Activated CD4-positive, alpha-beta T cell treated with anti-CD3 and anti-CD28 coated beads for 36 hours (primary cell): ENCODE measurements at regions of chr16 and their contacts with region 1.

Region 1: GRCh38 chr16:2867987-2868789 is 10.2 kb upstream of the PRSS22 start:
- DNase-seq: peak; percentile 98
- ATAC-seq: peak; percentile 97
- H3K4me3 Mint-ChIP-seq: peak overlapping the region; percentile 81
- H3K27ac Mint-ChIP-seq: peak overlapping the region; percentile 85
- H3K4me1 Mint-ChIP-seq: peaks cover 7% of the 10 kb centered on the region
- H3K27me3 Mint-ChIP-seq: no peaks in the 10 kb centered on the region

Region 2: GRCh38 chr16:2682209-2683021 is 185.8 kb before region 1 on chr16 and contains the start of gene KCTD5:
- CTCF ChIA-PET with region 1: no interaction called
- POLR2A ChIA-PET with region 1: no interaction called
- intact Hi-C with region 1: loop called in 1 of 2 experiments (anchors 1 kb)
- DNase-seq: peak; percentile 98
- ATAC-seq: peak; percentile 92
- H3K4me3 Mint-ChIP-seq: peak within 1 kb of the TSS; percentile 100
- H3K27ac Mint-ChIP-seq: peak within 1 kb of the TSS; percentile 98
- H3K4me1 Mint-ChIP-seq: peaks cover 28% of the 10 kb centered on the region
- H3K27me3 Mint-ChIP-seq: no peaks in the 10 kb centered on the region
- total RNA-seq, gene KCTD5: 24.0 to 26.2 TPM

Region 3: GRCh38 chr16:2777231-2777902 is 90.8 kb before region 1 on chr16 and contains the start of gene ELOB:
- CTCF ChIA-PET with region 1: interaction called, 3 read pairs
- POLR2A ChIA-PET with region 1: no interaction called
- intact Hi-C with region 1: loop called (anchors 1 to 5 kb)
- DNase-seq: peak; percentile 95
- ATAC-seq: peak; percentile 94
- H3K4me3 Mint-ChIP-seq: peak within 1 kb of the TSS; percentile 95
- H3K27ac Mint-ChIP-seq: peak within 1 kb of the TSS; percentile 96
- H3K4me1 Mint-ChIP-seq: peaks cover 26% of the 10 kb centered on the region
- H3K27me3 Mint-ChIP-seq: no peaks in the 10 kb centered on the region
- total RNA-seq, gene ELOB: 268 to 269 TPM

Region 4: GRCh38 chr16:2845116-2845515 is 23.1 kb before region 1 on chr16:
- CTCF ChIA-PET with region 1: interaction called, 33 read pairs
- POLR2A ChIA-PET with region 1: no interaction called
- intact Hi-C with region 1: loop called in 1 of 2 experiments (anchors 1 kb)
- DNase-seq: no peak
- ATAC-seq: no peak
- H3K4me3 Mint-ChIP-seq: no peak overlapping the region
- H3K27ac Mint-ChIP-seq: no peak overlapping the region
- H3K4me1 Mint-ChIP-seq: peaks cover 29% of the 10 kb centered on the region
- H3K27me3 Mint-ChIP-seq: peaks cover 4% of the 10 kb centered on the region

Region 5: DNA sequence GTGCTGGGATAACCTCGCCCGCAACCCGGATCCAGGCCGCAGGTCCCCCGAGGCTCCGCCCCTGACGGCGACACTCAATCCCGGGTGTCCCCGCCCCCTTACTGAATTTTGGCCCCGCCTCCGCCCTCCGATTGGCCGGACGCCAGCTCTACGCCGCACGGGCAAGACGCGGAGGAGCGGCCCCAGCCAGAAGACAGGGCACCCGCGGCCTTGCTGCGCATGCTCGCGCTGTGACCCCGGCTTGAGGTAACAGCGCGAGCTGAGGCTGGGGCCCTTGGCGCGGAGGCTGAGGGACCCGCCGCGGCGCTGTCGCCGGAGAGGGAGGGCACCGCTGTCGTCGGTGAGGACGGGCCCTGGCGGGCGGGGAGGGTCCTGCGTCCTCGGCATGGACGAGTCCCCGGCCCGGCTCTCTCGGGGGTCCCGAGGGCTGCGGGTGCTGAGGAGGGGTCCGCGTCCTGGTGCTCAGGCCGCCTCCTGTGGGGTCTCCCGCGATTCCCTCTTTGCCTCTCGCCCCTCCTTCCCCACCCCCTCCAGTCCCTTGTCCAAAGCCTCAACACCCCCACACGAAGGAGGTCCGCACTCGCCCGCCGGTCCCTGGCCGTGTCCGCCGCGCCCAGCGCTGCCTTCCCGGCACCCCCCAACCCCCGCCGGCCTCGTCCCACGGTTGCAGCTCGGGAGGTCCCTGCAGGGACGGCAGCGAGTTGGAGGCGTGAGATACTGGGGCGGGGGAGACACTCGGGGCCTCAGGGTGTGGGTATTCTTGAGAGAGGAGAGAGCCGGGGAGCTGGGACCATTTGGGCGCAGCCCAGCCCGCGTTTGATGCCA is 15.1 kb after region 1 on chr16 and contains the start of gene FLYWCH2:
- CTCF ChIA-PET with region 1: interaction called, 23 read pairs
- POLR2A ChIA-PET with region 1: interaction called, 7 read pairs
- intact Hi-C with region 1: loop called (anchors 1 to 2 kb)
- DNase-seq: peak; percentile 99
- ATAC-seq: peak; percentile 84
- H3K4me3 Mint-ChIP-seq: peak within 1 kb of the TSS; percentile 85
- H3K27ac Mint-ChIP-seq: peak within 1 kb of the TSS; percentile 92
- H3K4me1 Mint-ChIP-seq: peaks cover 10% of the 10 kb centered on the region
- H3K27me3 Mint-ChIP-seq: no peaks in the 10 kb centered on the region
- total RNA-seq, gene FLYWCH2: 16.8 to 17.3 TPM

Region 6: DNA sequence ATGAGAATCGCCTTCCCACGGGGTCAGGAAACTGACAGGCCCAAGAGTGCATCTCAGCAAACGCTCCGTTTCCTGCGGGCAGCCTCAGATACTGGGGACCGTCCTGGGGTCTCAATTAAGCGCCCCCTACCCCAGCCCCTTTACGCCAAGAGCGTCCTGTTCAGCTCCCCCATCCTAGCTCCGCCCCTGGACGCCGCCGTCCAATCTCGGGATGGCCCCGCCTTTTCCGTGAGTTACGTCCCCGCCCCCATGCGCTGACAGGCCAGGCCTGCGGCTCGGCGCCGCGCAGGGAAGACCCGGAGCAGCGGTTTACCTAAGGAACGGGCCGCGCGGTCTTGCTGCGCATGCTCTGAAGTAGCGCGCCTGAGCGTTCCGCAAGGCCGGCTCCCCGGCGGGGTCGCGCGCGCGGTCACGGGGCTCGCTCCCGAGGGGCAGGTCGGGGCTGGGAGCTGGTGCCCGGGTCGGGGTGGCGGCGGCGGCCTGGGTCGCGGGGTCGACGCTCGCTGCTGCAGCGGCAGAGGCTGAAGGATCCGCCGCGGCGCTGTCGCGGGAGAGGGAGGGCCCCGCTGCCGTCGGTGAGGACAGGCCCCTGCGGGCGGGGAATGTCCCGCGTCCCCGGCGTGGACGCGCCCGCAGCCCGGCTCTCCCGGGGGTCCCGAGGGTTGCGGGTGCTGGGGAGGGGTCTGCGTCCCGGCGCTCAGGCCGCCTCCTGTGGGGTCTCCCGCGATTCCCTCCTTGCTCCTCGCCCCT is 43.6 kb after region 1 on chr16 and contains the start of gene FLYWCH1:
- CTCF ChIA-PET with region 1: interaction called, 14 read pairs
- POLR2A ChIA-PET with region 1: interaction called, 6 read pairs
- intact Hi-C with region 1: loop called in 1 of 2 experiments (anchors 1 kb)
- DNase-seq: peak; percentile 100
- ATAC-seq: peak; percentile 98
- H3K4me3 Mint-ChIP-seq: peak within 1 kb of the TSS; percentile 81
- H3K27ac Mint-ChIP-seq: peak within 1 kb of the TSS; percentile 82
- H3K4me1 Mint-ChIP-seq: peaks cover 30% of the 10 kb centered on the region
- H3K27me3 Mint-ChIP-seq: no peaks in the 10 kb centered on the region
- total RNA-seq, gene FLYWCH1: 26.6 to 37.9 TPM

Region 7: DNA sequence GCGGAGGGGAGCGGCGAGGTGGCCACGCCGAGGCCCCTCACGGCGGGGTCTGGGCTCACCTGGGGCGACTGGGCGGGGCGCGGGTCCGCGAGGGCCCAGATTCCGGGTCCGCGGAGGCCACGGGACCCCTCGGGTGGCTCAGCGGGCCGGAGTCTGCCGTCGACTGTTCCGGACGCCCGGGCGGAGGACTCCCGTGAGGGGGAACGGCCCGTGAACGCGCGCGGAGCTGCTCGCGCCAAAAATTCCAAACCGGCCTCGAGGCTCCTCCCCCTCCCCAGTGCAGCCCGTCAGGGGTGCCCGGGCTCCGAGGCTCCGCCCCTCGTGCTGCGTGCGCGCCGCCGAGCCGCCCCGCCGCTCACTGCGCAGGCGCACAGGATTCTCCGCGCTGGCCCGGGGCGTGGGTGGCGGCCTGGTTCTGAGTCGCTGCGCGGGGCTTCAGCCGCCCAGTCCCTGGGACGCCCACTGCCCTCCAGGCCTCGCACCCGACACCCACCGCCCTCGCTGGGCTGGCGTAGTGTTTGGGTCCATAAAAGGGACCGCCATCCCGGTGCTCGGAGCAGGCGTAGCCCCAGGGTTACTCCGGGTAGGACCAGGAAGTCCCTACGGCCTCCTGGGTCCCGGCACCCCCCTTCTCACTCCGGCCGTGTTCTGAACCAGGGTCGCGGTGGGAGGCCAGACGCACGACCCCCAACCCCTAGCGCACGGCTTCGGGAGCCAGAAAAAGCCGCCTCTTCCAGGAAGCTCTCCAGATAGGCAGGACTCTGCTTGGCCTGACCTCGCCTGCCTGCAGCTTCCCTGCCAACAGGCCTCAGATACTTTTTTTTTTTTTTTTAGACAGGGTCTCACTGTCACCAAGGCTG is 112.3 kb after region 1 on chr16 and contains the start of gene PKMYT1:
- CTCF ChIA-PET with region 1: no interaction called
- POLR2A ChIA-PET with region 1: interaction called, 3 read pairs
- intact Hi-C with region 1: loop called in 1 of 2 experiments (anchors 1 kb)
- DNase-seq: peak; percentile 97
- ATAC-seq: peak; percentile 91
- H3K4me3 Mint-ChIP-seq: peak within 1 kb of the TSS; percentile 87
- H3K27ac Mint-ChIP-seq: peak within 1 kb of the TSS; percentile 84
- H3K4me1 Mint-ChIP-seq: peaks cover 6% of the 10 kb centered on the region
- H3K27me3 Mint-ChIP-seq: peaks cover 2% of the 10 kb centered on the region
- total RNA-seq, gene PKMYT1: 101 to 117 TPM